Activated CD8-positive, alpha-beta T cell treated with anti-CD3 and anti-CD28 coated beads for 36 hours (primary cell): ENCODE measurements at regions of chr5 and their contacts with region 1.

Region 1: GRCh38 chr5:132007399-132008165 is 3.9 kb downstream of the ACSL6 start:
- DNase-seq: peak; percentile 93
- ATAC-seq: peak; percentile 72
- H3K4me3 Mint-ChIP-seq: no peak overlapping the region
- H3K27ac Mint-ChIP-seq: no peak overlapping the region
- H3K4me1 Mint-ChIP-seq: peaks cover 24% of the 10 kb centered on the region
- H3K27me3 Mint-ChIP-seq: peaks cover 22% of the 10 kb centered on the region
- CTCF ChIP-seq: peak; percentile 88

Region 2: GRCh38 chr5:131423056-131423455 is 584.5 kb before region 1 on chr5:
- CTCF ChIA-PET with region 1: interaction called, 22 read pairs
- POLR2A ChIA-PET with region 1: no interaction called
- intact Hi-C with region 1: loop called (anchors 10 kb)
- DNase-seq: no peak
- ATAC-seq: no peak
- H3K4me3 Mint-ChIP-seq: no peak overlapping the region
- H3K27ac Mint-ChIP-seq: peak overlapping the region; percentile 57
- H3K4me1 Mint-ChIP-seq: peaks cover 19% of the 10 kb centered on the region
- H3K27me3 Mint-ChIP-seq: no peaks in the 10 kb centered on the region
- CTCF ChIP-seq: peak; percentile 50

Region 3: DNA sequence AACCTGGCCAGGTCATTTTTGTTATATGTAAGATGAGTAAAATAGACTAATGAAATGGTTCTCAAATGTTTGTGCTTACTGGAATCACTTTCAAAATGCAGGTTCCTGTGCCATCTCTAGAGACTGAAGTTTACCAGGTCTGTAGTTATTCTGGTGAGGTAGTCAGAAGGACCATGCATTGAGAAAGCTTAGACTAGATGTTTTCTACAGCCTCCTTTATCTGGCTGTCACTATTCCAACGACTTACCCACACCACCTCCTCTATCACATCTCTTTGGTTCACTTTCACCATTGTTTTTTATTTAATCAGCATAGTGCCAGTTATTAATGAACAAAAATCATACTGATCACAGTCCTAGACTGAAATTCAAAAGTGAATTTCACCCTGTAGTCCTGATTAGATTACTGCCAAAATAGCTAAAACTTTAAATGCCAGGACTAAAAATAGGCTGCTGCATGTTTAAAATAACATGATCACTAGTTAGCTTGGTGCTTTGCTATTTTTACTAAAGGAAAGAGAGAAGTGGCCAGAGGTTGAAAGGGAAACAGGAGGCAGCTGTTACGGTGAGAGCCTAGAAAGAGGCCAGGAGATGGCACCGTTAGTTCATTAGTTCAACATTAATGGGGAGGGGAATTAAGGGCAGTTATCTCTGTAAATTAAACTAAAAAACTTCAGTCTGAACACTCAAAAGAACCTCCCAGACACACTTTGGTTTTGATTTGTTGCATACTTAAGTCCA is 196.9 kb before region 1 on chr5:
- CTCF ChIA-PET with region 1: interaction called, 28 read pairs
- POLR2A ChIA-PET with region 1: no interaction called
- intact Hi-C with region 1: loop called (anchors 2 kb)
- DNase-seq: peak; percentile 28
- ATAC-seq: no peak
- H3K4me3 Mint-ChIP-seq: no peak overlapping the region
- H3K27ac Mint-ChIP-seq: no peak overlapping the region
- H3K4me1 Mint-ChIP-seq: no peaks in the 10 kb centered on the region
- H3K27me3 Mint-ChIP-seq: no peaks in the 10 kb centered on the region
- CTCF ChIP-seq: peak; percentile 22

Region 4: DNA sequence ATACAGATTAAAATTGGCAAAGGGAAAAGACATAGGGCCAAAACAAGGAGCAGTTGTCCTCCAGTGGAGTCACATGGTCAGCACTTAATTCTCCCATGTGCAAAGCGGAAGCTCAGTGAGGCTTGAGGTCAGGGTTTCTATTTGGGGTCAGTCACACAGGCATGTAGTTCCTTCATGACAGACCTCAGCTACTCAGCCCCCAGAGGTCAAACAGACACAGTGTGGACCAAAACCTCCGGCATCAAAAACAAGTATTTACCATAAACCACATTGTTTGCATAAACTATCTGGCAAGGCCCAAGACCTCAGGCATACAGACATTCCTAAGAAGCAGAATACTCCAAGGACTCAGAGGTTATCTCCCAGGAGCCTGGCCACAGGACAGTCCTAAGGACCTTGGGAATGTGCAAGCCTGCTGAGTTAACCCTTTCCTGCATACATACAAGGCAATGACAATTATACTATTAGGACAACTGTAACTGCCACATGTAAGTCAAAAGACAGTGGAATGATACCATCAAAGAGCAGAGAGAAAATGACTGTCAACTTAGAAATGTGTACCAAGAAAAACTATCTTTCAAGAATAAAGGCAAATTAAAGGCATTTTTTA is 182.1 kb before region 1 on chr5:
- CTCF ChIA-PET with region 1: interaction called, 10 read pairs
- POLR2A ChIA-PET with region 1: no interaction called
- intact Hi-C with region 1: no loop called
- DNase-seq: no peak
- ATAC-seq: no peak
- H3K4me3 Mint-ChIP-seq: no peak overlapping the region
- H3K27ac Mint-ChIP-seq: no peak overlapping the region
- H3K4me1 Mint-ChIP-seq: peaks cover 1% of the 10 kb centered on the region
- H3K27me3 Mint-ChIP-seq: no peaks in the 10 kb centered on the region
- CTCF ChIP-seq: no peak

Region 5: GRCh38 chr5:132019857-132020555 is 12.4 kb after region 1 on chr5:
- CTCF ChIA-PET with region 1: interaction called, 11 read pairs
- POLR2A ChIA-PET with region 1: interaction called, 5 read pairs
- intact Hi-C with region 1: no loop called
- DNase-seq: peak; percentile 92
- ATAC-seq: peak; percentile 90
- H3K4me3 Mint-ChIP-seq: peak overlapping the region; percentile 56
- H3K27ac Mint-ChIP-seq: peak overlapping the region; percentile 94
- H3K4me1 Mint-ChIP-seq: peaks cover 44% of the 10 kb centered on the region
- H3K27me3 Mint-ChIP-seq: peaks cover 17% of the 10 kb centered on the region
- CTCF ChIP-seq: no peak

Region 6: DNA sequence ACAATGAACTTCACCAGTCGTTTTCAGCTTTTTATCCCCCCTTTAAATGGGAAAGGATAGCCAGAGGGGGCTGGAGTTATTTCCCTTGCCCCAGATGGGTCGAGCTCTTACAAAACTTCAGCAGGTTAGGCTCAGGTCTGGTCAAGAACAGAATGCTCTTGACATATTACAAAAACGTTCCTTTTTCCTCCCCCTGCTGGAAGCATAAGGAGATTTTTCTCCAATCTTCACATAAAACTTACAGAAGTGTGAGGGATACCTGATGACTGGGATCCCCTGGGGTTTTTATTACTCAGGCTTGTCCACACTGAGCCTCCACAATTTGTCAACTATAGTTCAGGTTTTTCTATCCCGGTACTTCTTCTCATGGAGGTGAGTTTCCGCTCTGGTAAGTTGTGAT is 126.8 kb after region 1 on chr5:
- CTCF ChIA-PET with region 1: no interaction called
- POLR2A ChIA-PET with region 1: no interaction called
- intact Hi-C with region 1: no loop called
- DNase-seq: no peak
- ATAC-seq: no peak
- H3K4me3 Mint-ChIP-seq: no peak overlapping the region
- H3K27ac Mint-ChIP-seq: no peak overlapping the region
- H3K4me1 Mint-ChIP-seq: peaks cover 7% of the 10 kb centered on the region
- H3K27me3 Mint-ChIP-seq: peaks cover 13% of the 10 kb centered on the region
- CTCF ChIP-seq: peak; percentile 30